Breast epithelium (tissue), 4 donors: ENCODE measurements at regions of chr3 and their contacts with region 1.

Region 1: DNA sequence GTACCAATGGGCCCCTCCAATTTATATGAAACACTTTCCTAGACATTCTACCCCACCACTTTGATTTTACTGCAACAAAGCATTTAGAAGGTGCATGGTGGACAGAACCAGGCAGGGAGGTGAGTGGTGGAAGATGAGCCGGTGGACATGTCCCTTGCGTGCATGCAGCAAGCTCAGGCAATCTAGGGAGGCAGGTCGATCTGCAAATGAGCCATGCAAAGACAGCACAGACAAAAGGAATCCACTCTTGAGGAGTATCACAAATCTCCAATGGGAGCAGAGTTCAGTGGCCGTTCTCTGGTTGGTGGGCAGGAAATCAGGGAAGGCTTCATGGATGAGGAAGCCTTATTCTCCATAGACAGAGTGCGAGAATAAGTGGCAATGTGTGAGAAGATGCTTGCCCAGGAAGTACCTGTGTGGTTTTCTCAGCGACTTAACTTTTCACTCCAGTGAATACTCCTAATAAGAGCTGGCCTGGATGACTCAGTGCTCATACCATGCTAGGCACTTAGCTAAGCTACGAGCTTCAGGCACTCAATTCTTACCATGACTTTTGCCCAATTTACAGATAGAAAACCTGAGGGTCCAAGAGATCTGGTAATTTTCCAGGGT is 152.5 kb downstream of the FOXP1 start:
- DNase-seq: no peak
- H3K4me3 ChIP-seq: no peak overlapping the region
- H3K27ac ChIP-seq: peak overlapping the region in 1 of 2 donors; percentile 34
- H3K4me1 ChIP-seq: peaks cover 4 to 8% of the 10 kb centered on the region in 2 donors
- H3K27me3 ChIP-seq: no peaks in the 10 kb centered on the region
- CTCF ChIP-seq: no peak
- POLR2A ChIP-seq: no peak

Region 2: GRCh38 chr3:71416876-71417275 is 14.2 kb before region 1 on chr3:
- intact Hi-C with region 1: no loop called
- DNase-seq: no peak
- H3K4me3 ChIP-seq: no peak overlapping the region
- H3K27ac ChIP-seq: no peak overlapping the region
- H3K4me1 ChIP-seq: no peaks in the 10 kb centered on the region
- H3K27me3 ChIP-seq: no peaks in the 10 kb centered on the region
- CTCF ChIP-seq: no peak
- POLR2A ChIP-seq: no peak

Region 3: DNA sequence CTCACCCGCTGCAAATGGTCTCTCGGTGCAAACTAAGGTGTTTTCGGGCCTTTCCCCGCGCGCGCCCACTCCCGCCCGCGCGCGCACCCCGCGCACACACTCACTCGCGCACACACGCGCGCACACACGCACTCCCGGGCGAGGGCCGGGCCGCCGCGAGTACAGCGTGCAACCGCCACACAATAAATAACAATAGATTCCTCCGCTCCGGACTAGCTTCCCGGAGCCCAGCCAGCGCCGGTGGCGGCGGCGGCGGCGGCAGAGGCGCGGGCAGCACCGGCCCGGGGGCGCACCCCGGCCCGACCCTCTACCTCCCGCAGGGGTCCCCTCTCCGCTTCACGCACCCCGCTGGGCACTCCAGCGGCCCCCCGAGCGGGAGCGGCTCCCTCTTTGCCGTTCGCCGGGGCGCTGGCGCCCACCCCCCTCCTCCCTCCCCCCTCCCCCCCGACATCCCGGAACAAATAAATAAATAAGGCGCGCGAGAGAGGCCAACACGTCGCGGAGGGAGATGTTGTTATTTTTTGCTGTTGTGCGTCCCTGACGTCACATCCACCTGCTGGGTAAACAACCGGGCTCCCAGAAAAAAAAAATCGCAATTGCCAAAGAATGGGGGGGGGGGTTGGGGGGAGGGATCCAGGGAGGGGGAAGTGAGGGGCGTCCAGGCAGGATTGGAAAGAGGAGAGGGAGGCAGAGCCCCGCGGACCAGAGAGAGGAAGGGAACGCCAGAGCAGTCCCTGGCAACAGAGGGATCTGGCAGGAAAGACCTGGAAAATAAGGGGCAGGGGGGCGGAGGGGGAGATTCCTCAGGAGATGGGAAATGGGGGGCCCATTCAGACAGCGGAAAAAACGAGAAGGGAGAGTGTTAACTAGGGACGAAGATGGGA is 152.8 kb after region 1 on chr3 and contains the start of gene FOXP1:
- intact Hi-C with region 1: loop called (anchors 5 kb)
- DNase-seq: peak; percentile 60 to 75
- H3K4me3 ChIP-seq: peak within 1 kb of the TSS; percentile 60 to 95 (median 73)
- H3K27ac ChIP-seq: peak within 1 kb of the TSS; percentile 98 to 99
- H3K4me1 ChIP-seq: no peaks in the 10 kb centered on the region
- H3K27me3 ChIP-seq: no peaks in the 10 kb centered on the region
- CTCF ChIP-seq: no peak
- POLR2A ChIP-seq: peak; percentile 23
- total RNA-seq, gene FOXP1: 61.9 to 267 (median 146) TPM